ENCODE measurements at regions of chr19 and their contacts with region 1.

Region 1: DNA sequence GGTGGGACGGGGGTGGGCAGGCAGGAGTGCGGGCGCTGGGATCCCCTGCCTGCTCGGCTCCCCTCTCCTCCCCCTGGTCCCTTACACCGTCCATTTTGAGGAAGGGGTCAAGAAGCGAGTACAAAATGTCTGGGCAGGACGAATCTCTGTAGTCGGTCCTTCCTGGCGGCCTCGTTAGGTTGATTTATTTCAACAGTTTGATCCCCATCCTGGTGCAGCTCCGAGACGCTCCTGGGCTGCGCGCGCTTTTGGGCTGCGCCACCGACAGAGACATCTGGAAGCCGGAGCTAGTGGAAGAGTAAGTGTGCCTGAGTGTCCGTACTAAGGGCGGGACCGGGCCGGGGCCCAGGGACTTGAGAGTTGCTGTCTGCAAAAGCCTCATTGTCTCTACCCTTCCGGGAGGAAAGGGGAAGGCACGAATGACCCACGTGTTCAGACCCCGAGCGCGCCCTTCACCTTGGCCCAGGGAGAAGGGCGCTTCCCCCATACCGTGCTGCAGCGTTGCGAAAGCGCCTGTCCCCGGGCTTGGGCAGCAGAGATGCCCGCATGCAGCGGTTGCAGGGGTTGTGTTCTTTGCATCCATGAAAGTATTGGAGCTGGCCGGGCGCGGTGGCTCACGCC is 1.8 kb downstream of the ZNF114 start:
- DNase-seq: peak in 3 of 14 experiments; percentile 19 to 26 (median 23)
- ATAC-seq: no peak
- H3K4me3 ChIP-seq: peak overlapping the region; percentile 55
- H3K4me3 Mint-ChIP-seq: peak overlapping the region; percentile 63
- H3K27ac ChIP-seq: no peak overlapping the region
- H3K27ac Mint-ChIP-seq: no peak overlapping the region
- H3K4me1 ChIP-seq: peaks cover 18% of the 10 kb centered on the region
- H3K4me1 Mint-ChIP-seq: peaks cover 20% of the 10 kb centered on the region
- H3K27me3 ChIP-seq: peaks cover 0 to 14% of the 10 kb centered on the region in 2 experiments
- H3K27me3 Mint-ChIP-seq: peaks cover 31% of the 10 kb centered on the region
- CTCF ChIP-seq: no peak

Region 2: DNA sequence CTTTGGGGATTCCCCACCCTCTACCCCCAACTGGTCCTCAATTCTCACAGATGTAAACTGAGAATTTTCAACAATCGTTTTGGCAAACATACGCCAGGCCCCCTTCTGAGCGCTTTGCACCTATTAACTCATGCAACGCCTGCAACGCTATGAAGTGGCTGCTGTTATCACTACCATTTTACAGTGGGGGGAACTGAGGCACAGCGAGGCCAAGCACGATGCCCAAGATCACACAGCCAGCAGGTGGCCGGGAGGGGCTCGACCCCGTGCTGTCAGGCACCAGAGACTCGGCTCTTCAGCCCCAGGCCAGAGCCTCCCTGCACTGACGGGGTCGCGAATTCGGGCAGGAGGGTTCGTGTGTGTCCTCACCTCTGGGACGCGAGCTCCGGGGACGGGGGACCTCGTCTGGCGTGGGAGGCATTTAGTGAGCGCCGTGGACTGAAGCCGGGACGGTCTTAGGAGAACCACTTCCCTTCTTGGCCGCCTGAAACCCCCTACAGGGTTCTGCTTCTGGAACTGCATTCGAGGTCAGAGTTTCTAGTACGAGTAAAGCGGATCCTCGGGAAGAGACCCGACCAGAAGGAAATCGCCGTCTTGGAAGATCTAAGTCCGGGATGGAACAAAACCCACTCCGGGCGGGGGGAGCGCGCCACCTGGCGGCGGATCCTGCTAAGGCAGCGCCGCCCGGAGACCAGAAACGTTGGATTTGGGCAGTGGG is 19.3 kb after region 1 on chr19:
- CTCF ChIA-PET with region 1: no interaction called
- POLR2A ChIA-PET with region 1: no interaction called
- intact Hi-C with region 1: loop called (anchors 1 kb)
- DNase-seq: peak; percentile 24 to 79 (median 54)
- ATAC-seq: peak; percentile 61
- H3K4me3 ChIP-seq: peak overlapping the region; percentile 58
- H3K4me3 Mint-ChIP-seq: peak overlapping the region; percentile 76
- H3K27ac ChIP-seq: no peak overlapping the region
- H3K27ac Mint-ChIP-seq: no peak overlapping the region
- H3K4me1 ChIP-seq: peaks cover 10% of the 10 kb centered on the region
- H3K4me1 Mint-ChIP-seq: no peaks in the 10 kb centered on the region
- H3K27me3 ChIP-seq: peaks cover 0 to 2% of the 10 kb centered on the region in 2 experiments
- H3K27me3 Mint-ChIP-seq: peaks cover 14% of the 10 kb centered on the region
- CTCF ChIP-seq: peak; percentile 99